Activated CD4-positive, alpha-beta memory T cell treated with anti-CD3 and anti-CD28 coated beads for 36 hours (primary cell): ENCODE measurements at regions of chr16 and their contacts with region 1.

Region 1: GRCh38 chr16:53743149-53743566 is 39.2 kb downstream of the FTO start:
- DNase-seq: peak; percentile 28
- H3K4me3 Mint-ChIP-seq: no peak overlapping the region
- H3K27ac Mint-ChIP-seq: no peak overlapping the region
- H3K4me1 Mint-ChIP-seq: peaks cover 40% of the 10 kb centered on the region
- H3K27me3 Mint-ChIP-seq: no peaks in the 10 kb centered on the region

Region 2: GRCh38 chr16:53664724-53665345 is 78.3 kb before region 1 on chr16:
- CTCF ChIA-PET with region 1: interaction called, 4 read pairs
- POLR2A ChIA-PET with region 1: no interaction called
- intact Hi-C with region 1: loop called (anchors 1 kb)
- DNase-seq: peak; percentile 53
- H3K4me3 Mint-ChIP-seq: no peak overlapping the region
- H3K27ac Mint-ChIP-seq: peak overlapping the region; percentile 2
- H3K4me1 Mint-ChIP-seq: peaks cover 17% of the 10 kb centered on the region
- H3K27me3 Mint-ChIP-seq: no peaks in the 10 kb centered on the region

Region 3: GRCh38 chr16:53703590-53704444 is 39.3 kb before region 1 on chr16 and contains the starts of genes FTO and RPGRIP1L:
- CTCF ChIA-PET with region 1: interaction called, 7 read pairs
- POLR2A ChIA-PET with region 1: no interaction called
- intact Hi-C with region 1: loop called (anchors 2 kb)
- DNase-seq: peak; percentile 99
- H3K4me3 Mint-ChIP-seq: peak within 1 kb of the TSS; percentile 99
- H3K27ac Mint-ChIP-seq: peak within 1 kb of the TSS; percentile 91
- H3K4me1 Mint-ChIP-seq: peaks cover 34% of the 10 kb centered on the region
- H3K27me3 Mint-ChIP-seq: no peaks in the 10 kb centered on the region
- total RNA-seq, gene FTO: 50.7 to 53.1 TPM
- total RNA-seq, gene RPGRIP1L: 6.2 to 6.5 TPM

Region 4: GRCh38 chr16:53754909-53755535 is 11.9 kb after region 1 on chr16:
- CTCF ChIA-PET with region 1: interaction called, 16 read pairs
- POLR2A ChIA-PET with region 1: no interaction called
- intact Hi-C with region 1: no loop called
- DNase-seq: no peak
- H3K4me3 Mint-ChIP-seq: no peak overlapping the region
- H3K27ac Mint-ChIP-seq: no peak overlapping the region
- H3K4me1 Mint-ChIP-seq: peaks cover 2% of the 10 kb centered on the region
- H3K27me3 Mint-ChIP-seq: no peaks in the 10 kb centered on the region

Region 5: DNA sequence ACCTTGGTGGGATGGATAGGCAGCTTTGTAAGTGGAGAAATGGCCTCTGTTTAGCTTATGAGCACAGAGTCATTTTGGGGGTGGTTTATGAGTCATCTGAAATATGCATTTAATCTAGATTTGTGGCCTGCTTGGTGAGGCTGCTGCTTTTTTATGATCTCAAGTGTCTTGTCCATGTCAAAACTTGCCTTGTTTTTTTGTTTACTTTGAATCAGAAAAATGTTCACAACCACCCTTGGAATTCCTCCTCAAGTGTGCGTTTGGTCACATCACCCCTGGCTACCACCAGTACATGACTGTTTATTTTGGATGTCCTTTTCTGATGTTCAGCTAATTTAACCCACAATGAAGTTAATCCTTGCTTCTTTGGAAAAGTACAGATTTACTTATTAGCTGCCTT is 25.4 kb after region 1 on chr16:
- CTCF ChIA-PET with region 1: interaction called, 21 read pairs
- POLR2A ChIA-PET with region 1: no interaction called
- intact Hi-C with region 1: no loop called
- DNase-seq: peak; percentile 17
- H3K4me3 Mint-ChIP-seq: no peak overlapping the region
- H3K27ac Mint-ChIP-seq: no peak overlapping the region
- H3K4me1 Mint-ChIP-seq: peaks cover 25% of the 10 kb centered on the region
- H3K27me3 Mint-ChIP-seq: no peaks in the 10 kb centered on the region

Region 6: GRCh38 chr16:53775821-53776431 is 32.8 kb after region 1 on chr16:
- CTCF ChIA-PET with region 1: interaction called, 14 read pairs
- POLR2A ChIA-PET with region 1: no interaction called
- intact Hi-C with region 1: no loop called
- DNase-seq: no peak
- H3K4me3 Mint-ChIP-seq: no peak overlapping the region
- H3K27ac Mint-ChIP-seq: no peak overlapping the region
- H3K4me1 Mint-ChIP-seq: peaks cover 20% of the 10 kb centered on the region
- H3K27me3 Mint-ChIP-seq: no peaks in the 10 kb centered on the region

Region 7: DNA sequence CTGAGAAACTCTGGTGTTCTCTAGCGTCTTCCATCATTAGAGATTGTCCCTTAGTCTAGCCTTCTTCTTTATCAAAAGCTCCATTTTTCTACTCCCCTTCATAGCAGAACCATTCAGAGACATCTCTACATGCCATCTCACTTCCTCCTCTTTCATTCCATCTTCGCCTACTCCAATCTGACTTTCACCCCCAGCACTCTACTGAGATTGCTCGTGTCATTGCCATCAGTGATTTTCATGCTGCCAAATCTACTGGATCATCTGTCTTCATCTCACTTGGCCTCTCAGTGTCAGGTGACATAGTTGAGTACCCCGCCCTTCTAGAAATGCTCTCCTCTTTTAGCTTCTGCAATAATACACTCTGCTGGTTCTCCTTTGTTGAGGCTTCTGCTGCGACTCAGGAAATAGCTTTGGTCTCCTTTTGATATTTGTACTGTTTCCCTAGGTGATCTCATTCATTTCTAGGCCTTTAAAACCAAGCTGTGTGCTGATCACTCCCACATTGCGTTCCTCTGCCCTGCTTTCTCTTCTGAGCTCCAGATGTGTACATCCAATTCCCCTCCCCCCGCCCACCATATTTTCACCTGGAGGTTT is 79.9 kb after region 1 on chr16:
- CTCF ChIA-PET with region 1: interaction called, 5 read pairs
- POLR2A ChIA-PET with region 1: no interaction called
- intact Hi-C with region 1: loop called (anchors 5 kb)
- DNase-seq: peak; percentile 27
- H3K4me3 Mint-ChIP-seq: no peak overlapping the region
- H3K27ac Mint-ChIP-seq: no peak overlapping the region
- H3K4me1 Mint-ChIP-seq: peaks cover 19% of the 10 kb centered on the region
- H3K27me3 Mint-ChIP-seq: no peaks in the 10 kb centered on the region